Mucosa of descending colon (tissue), 3 donors: ENCODE measurements at regions of chr17 and their contacts with region 1.

Region 1: GRCh38 chr17:4565209-4566141 is 5.1 kb upstream of the GGT6 start:
- DNase-seq: peak; percentile 75 to 76 (median 75)
- ATAC-seq: peak; percentile 80
- H3K4me3 ChIP-seq: no peak overlapping the region
- H3K4me1 ChIP-seq: peaks cover 28% of the 10 kb centered on the region
- CTCF ChIP-seq: peak; percentile 83

Region 2: DNA sequence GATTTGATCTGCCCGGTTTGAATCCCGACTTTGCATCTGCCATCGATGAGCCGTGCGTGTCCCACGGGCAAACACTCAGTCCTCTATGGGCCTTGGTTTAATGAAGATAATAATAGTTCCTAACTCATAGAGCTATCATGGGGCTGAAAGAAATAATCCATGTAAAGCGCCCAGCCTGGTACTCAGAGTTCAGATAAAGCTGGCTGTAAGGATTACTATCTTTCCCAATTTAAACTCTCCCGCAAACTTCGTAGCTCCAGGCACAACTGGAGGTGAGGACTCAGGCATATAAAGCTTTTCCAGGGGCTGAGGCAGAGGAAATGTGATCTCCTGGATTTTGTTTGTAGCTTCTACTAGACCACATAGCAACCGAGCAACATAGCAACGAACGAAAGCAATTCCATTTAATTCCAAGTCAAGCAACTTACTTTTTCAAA is 59.7 kb after region 1 on chr17:
- intact Hi-C with region 1: loop called in 1 of 2 experiments (anchors 5 kb)
- DNase-seq: no peak
- ATAC-seq: no peak
- H3K4me3 ChIP-seq: no peak overlapping the region
- H3K4me1 ChIP-seq: no peaks in the 10 kb centered on the region
- CTCF ChIP-seq: no peak